ENCODE measurements at regions of chr1 and their contacts with region 1.

Region 1: DNA sequence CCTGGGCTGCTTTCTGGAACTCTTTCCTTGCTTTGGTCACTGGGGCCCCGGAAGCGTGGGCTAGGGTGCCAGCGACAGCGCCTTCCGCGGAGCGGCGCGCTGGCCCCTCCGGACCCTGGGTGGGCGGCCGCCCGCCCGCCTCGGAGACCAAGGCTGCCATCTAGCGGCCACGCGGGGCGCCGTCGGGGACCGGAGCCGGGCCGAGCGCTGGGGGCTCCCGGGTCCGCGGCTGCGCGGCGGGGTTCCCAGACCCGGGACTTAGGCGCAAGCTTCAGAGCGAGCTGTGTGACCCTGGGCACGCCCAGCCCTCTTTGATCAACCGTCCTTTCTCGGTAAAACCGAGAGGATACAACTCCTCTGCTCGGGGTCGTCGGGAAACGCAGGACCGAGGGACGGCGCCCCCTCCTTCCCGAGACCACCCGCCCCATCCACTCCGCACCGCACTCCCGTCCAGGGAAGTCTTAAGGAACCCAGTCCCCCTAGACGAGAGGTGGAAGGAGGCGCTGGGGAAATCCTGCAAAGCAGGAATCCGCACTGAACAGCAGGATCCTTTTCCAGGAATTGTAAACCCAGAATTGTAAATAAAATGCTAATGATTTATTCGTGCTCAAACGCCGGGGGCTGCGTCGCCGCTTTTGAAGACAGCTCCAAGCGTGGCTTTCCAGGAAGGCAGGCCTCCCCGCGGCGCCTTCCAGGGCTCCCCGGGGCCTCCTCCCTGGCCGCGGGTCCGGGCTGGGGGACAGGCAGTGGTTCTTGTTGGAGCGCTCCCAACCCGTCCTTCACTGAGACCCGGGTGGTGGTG is 41.2 kb downstream of the RRAGC start:
- DNase-seq: peak in 1 of 2 experiments; percentile 36
- ATAC-seq: peak; percentile 55 to 92; a peak in 5 of 6 replicates
- H3K4me3 ChIP-seq: peak overlapping the region; percentile 45
- H3K27ac ChIP-seq: peak overlapping the region in 1 of 2 experiments; percentile 43; a peak in 1 of 6 replicates
- H3K4me1 ChIP-seq: no peaks in the 10 kb centered on the region
- CTCF ChIP-seq: peak; percentile 72
- EP300 ChIP-seq: no peak
- POLR2A ChIP-seq: no peak
- RAD21 ChIP-seq: peak; percentile 45 to 76; a peak in 4 of 5 replicates

Region 2: GRCh38 chr1:38834937-38835827 is 16.8 kb after region 1 on chr1:
- CTCF ChIA-PET with region 1: interaction called, 13 read pairs
- POLR2A ChIA-PET with region 1: no interaction called
- DNase-seq: peak; percentile 43 to 82
- ATAC-seq: peak; percentile 95 to 96
- H3K4me3 ChIP-seq: no peak overlapping the region
- H3K27ac ChIP-seq: no peak overlapping the region
- H3K4me1 ChIP-seq: no peaks in the 10 kb centered on the region
- CTCF ChIP-seq: peak; percentile 66
- EP300 ChIP-seq: no peak
- POLR2A ChIP-seq: no peak
- RAD21 ChIP-seq: peak; percentile 75 to 79

Measured in A549 (cell line).